ENCODE measurements at regions of chrX and their contacts with region 1.

Region 1: DNA sequence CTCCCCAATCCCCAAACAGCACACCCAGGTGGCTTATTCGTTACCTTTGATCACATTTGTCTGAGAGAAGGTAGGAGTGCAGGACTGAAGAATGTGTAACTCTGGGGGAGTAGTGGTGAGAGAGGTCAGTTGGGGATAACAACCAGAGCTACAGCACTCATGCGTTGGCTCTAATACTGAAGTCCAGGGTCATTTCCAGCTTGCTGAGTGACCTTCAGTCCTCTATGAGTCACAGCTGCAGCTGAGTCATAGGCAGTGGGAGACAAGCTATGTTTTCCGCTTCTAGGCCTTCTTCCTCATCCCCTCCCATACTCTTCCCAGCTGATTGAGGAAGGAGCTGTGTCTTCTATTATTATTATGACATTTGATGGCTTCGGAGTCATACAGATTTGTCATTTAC is 31.6 kb upstream of the CT47C1 start:
- DNase-seq: peak in 2 of 3 donors; percentile 42 to 53
- ATAC-seq: peak; percentile 93 to 98 (median 94)
- H3K4me3 ChIP-seq: no peak overlapping the region
- H3K27ac ChIP-seq: no peak overlapping the region
- H3K4me1 ChIP-seq: no peaks in the 10 kb centered on the region
- H3K27me3 ChIP-seq: no peaks in the 10 kb centered on the region
- CTCF ChIP-seq: no peak
- POLR2A ChIP-seq: no peak

Region 2: GRCh38 chrX:118637997-118638396 is 403.2 kb before region 1 on chrX:
- intact Hi-C with region 1: loop called in 1 of 2 experiments (anchors 10 kb)
- DNase-seq: no peak
- ATAC-seq: peak; percentile 58 to 70 (median 64)
- H3K4me3 ChIP-seq: no peak overlapping the region
- H3K27ac ChIP-seq: no peak overlapping the region
- H3K4me1 ChIP-seq: no peaks in the 10 kb centered on the region
- H3K27me3 ChIP-seq: no peaks in the 10 kb centered on the region
- CTCF ChIP-seq: peak; percentile 26 to 47 (median 42)
- POLR2A ChIP-seq: no peak

Region 3: DNA sequence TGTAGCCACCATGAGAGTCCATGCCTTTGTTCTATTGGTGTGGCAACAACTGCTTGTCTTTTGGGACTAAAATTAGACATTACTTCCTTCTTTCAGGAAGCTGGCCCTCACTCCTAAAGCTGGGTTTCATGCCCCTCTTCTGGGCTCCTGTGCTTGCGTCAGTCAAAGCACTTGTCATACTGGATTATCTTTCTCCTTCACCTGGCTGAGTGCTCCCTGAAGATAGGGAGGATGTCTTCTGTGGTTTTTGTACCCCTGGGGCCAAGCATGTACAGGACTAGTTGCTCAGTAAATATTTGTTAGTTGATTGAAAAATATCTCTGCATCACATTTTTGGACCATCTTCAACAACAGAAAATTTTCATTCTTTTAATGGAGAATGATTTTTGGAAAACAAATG is 92.9 kb before region 1 on chrX:
- intact Hi-C with region 1: no loop called
- DNase-seq: no peak
- ATAC-seq: no peak
- H3K4me3 ChIP-seq: no peak overlapping the region
- H3K27ac ChIP-seq: no peak overlapping the region
- H3K4me1 ChIP-seq: no peaks in the 10 kb centered on the region
- H3K27me3 ChIP-seq: no peaks in the 10 kb centered on the region
- CTCF ChIP-seq: no peak
- POLR2A ChIP-seq: no peak

Region 4: GRCh38 chrX:118961866-118962560 is 79.2 kb before region 1 on chrX:
- intact Hi-C with region 1: no loop called
- DNase-seq: no peak
- ATAC-seq: peak in 1 of 4 donors; percentile 45
- H3K4me3 ChIP-seq: no peak overlapping the region
- H3K27ac ChIP-seq: no peak overlapping the region
- H3K4me1 ChIP-seq: no peaks in the 10 kb centered on the region
- H3K27me3 ChIP-seq: no peaks in the 10 kb centered on the region
- CTCF ChIP-seq: no peak
- POLR2A ChIP-seq: no peak

Region 5: DNA sequence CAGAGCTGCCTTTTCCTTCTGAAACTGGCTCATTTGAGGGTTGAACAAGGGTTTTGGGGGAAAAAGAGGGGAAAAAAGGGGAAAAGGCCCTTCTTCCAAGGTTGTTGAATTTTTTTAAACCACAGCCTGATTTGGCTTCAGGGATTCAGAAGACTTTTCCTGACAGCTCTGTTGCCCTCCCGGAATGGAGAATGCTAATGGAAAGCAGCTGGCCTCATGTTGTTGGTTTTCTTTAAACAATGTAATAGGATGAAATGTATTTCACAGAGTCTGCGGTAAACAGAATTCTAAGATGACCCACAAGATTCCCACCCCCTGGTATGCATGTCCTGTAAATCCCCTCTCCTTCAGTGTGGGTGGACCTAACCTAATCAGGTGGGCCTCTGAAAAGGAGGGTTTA is 89.7 kb after region 1 on chrX:
- intact Hi-C with region 1: no loop called
- DNase-seq: no peak
- ATAC-seq: no peak
- H3K4me3 ChIP-seq: no peak overlapping the region
- H3K27ac ChIP-seq: no peak overlapping the region
- H3K4me1 ChIP-seq: peaks cover 0 to 4% (median 0%) of the 10 kb centered on the region in 4 donors
- H3K27me3 ChIP-seq: no peaks in the 10 kb centered on the region
- CTCF ChIP-seq: no peak
- POLR2A ChIP-seq: no peak

Measured in right lobe of liver (tissue), 6 donors.